GM12878 (cell line): ENCODE measurements at regions of chr6 and their contacts with region 1.

Region 1: GRCh38 chr6:165782134-165782533 is 119.1 kb upstream of the PDE10A start:
- DNase-seq: no peak
- ATAC-seq: no peak
- H3K4me3 ChIP-seq: no peak overlapping the region
- H3K27ac ChIP-seq: no peak overlapping the region
- H3K4me1 ChIP-seq: no peaks in the 10 kb centered on the region
- H3K27me3 ChIP-seq: no peaks in the 10 kb centered on the region
- CTCF ChIP-seq: no peak
- EP300 ChIP-seq: no peak
- POLR2A ChIP-seq: no peak
- RAD21 ChIP-seq: no peak

Region 2: DNA sequence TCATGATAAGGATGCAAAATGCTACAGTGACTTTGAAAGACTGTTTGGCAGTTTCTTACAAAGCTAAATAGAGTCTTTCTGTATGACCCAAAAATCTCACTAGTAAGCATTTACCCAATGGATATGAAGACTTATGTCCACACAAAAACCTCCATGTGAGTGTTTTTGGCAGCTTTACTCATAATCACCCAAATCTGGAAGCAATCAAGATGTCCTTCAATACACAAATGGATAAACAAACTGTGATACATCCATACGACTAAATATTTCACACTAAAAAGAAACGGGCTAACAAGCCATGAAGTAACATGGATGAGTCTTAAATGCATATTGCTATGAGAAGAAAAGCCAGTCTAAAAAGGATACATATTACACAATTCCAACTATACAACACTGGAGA is 236.3 kb before region 1 on chr6:
- CTCF ChIA-PET with region 1: no interaction called
- POLR2A ChIA-PET with region 1: no interaction called
- RAD21 ChIA-PET with region 1: no interaction called
- SMC1A ChIA-PET with region 1: no interaction called
- in situ Hi-C with region 1: no loop called
- intact Hi-C with region 1: no loop called
- DNase-seq: no peak
- ATAC-seq: no peak
- H3K4me3 ChIP-seq: no peak overlapping the region
- H3K27ac ChIP-seq: no peak overlapping the region
- H3K4me1 ChIP-seq: no peaks in the 10 kb centered on the region
- H3K27me3 ChIP-seq: no peaks in the 10 kb centered on the region
- CTCF ChIP-seq: no peak
- EP300 ChIP-seq: no peak
- POLR2A ChIP-seq: no peak
- RAD21 ChIP-seq: no peak

Region 3: DNA sequence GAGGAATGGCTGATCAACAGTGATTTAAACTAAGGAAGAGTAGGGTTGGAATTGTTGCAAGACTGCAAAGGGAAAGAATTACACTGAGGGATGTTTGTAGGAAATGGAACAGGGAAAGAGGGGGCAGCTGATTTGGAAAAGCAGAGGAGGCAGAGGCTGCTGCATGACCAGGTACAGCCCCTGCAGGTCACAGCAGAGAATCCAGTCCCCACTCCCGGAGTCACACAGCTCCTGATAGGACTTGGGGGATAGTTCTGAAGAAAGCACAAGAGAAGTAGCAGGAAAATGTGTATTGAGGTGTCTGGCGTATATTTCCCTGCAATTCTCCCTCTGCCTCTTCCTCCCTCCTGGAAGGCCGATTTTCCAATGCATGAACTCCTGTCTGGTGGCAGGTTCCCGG is 26.6 kb before region 1 on chr6:
- CTCF ChIA-PET with region 1: no interaction called
- POLR2A ChIA-PET with region 1: no interaction called
- RAD21 ChIA-PET with region 1: no interaction called
- SMC1A ChIA-PET with region 1: no interaction called
- in situ Hi-C with region 1: no loop called
- intact Hi-C with region 1: loop called (anchors 2 kb)
- DNase-seq: no peak
- ATAC-seq: no peak
- H3K4me3 ChIP-seq: no peak overlapping the region
- H3K27ac ChIP-seq: no peak overlapping the region
- H3K4me1 ChIP-seq: no peaks in the 10 kb centered on the region
- H3K27me3 ChIP-seq: no peaks in the 10 kb centered on the region
- CTCF ChIP-seq: no peak
- EP300 ChIP-seq: no peak
- POLR2A ChIP-seq: no peak
- RAD21 ChIP-seq: no peak